ENCODE measurements at regions of chr1 and their contacts with region 1.

Region 1: DNA sequence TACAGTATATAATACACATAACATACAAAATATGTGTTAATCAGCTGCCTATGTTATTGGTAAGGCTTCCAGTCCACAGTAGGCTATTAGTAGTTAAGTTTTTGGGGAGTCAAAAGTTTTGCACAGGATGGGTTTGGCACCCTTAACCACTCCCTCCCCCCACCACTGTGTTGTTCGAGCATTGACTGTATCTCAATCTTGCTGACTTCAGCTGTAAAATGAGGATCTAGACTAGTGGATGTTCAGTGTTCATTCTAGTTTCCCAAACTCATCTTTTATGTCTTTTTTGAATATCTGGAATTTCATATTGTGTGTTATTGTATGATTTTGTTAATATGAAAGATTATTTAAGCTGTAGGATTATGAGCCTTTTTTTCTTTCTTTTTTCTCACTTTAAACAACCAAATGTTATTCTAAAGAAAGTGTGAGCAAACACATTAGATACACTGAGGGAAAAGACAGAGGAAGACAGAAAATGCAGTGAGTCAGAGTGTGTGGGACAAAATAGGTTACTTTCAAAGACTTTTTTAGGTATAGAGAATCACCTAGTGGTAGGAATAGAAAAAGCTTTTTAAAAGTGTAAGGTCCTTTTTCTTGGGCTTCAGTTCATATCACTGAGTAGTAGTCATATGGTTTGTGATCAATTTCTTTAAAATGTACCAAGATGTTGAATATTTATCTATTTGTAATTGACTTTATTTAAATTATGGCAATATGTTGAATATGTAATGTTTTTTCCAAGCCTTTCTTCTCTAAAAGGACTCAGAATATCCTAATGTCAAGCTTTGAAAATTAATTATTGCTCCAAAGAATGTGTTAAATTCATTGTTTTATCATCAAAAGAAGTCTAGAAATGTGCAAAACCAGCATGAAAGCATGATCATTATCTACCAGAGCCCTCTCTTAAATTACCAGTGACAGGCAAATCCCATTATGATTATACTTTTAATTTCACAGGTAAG is 17.9 kb upstream of the CENPF start:
- DNase-seq: no peak
- ATAC-seq: peak; percentile 81

Region 2: DNA sequence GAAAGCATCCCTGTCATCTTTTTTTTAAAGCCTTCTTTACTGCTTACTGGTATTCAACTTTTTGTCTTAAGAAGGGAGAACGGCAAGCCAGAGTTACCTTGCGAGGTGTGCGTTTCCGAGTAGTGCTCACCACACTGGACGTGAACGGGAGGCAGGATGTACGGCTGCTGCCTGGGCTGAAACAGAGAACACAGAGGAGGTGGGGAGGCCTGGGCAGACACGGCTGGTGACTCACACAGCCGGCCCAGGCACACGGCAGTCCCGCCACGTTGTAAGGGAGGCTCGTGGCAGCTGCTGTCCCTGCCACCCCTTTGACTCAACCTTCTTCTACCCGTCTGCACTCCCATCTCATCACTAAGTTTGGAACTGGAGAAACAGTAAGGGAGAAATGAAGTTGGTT is 198.3 kb before region 1 on chr1:
- intact Hi-C with region 1: loop called (anchors 10 kb)
- DNase-seq: no peak
- ATAC-seq: peak; percentile 29